ENCODE measurements at regions of chr17 and their contacts with region 1.

Region 1: GRCh38 chr17:74833501-74834377 is 25.9 kb downstream of the GRIN2C start:
- DNase-seq: no peak
- H3K4me3 ChIP-seq: no peak overlapping the region
- H3K27ac ChIP-seq: peak overlapping the region; percentile 30
- H3K4me1 ChIP-seq: peaks cover 14% of the 10 kb centered on the region
- H3K27me3 ChIP-seq: no peaks in the 10 kb centered on the region
- CTCF ChIP-seq: no peak

Region 2: DNA sequence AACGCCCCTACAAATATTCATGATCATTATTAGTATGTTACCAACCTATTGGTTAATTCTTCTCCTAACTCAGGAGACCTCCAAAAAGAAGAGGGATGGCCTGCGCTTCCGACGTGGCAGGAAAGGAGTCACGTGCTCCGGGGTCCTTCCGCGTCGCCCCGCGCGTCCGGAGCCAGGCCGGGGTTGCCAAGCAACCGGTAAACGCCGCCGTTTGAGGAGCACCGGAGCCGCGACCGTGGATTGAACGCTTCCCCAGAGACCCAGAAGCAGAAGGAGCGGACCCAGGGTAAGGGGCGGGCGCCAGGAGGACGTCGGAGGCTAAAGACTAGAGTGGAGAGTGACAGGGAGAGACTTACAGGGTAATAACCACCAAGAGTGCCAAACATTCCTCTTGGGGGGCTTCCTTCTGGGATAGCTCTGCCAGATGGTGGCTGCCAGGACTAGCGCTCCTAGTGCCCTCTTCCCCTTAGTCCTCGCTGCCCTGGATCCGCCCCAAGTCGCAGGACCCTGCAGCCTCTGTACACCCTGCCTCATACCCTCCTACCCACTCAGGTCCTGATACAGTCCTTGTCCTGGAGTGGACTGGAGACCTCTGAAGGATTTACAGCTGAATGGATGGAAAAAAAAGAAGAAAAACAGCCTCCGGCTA is 559.6 kb before region 1 on chr17 and contains the start of gene DNAI2:
- CTCF ChIA-PET with region 1: no interaction called
- POLR2A ChIA-PET with region 1: no interaction called
- intact Hi-C with region 1: no loop called
- DNase-seq: no peak
- H3K4me3 ChIP-seq: no peak within 1 kb of the TSS
- H3K27ac ChIP-seq: no peak within 1 kb of the TSS
- H3K4me1 ChIP-seq: no peaks in the 10 kb centered on the region
- H3K27me3 ChIP-seq: peaks cover 3% of the 10 kb centered on the region
- CTCF ChIP-seq: no peak
- total RNA-seq, gene DNAI2: not detected in 2 replicates

Region 3: GRCh38 chr17:74702116-74702871 is 131.4 kb before region 1 on chr17:
- CTCF ChIA-PET with region 1: no interaction called
- POLR2A ChIA-PET with region 1: no interaction called
- intact Hi-C with region 1: no loop called
- DNase-seq: no peak
- H3K4me3 ChIP-seq: no peak overlapping the region
- H3K27ac ChIP-seq: no peak overlapping the region
- H3K4me1 ChIP-seq: no peaks in the 10 kb centered on the region
- H3K27me3 ChIP-seq: peaks cover 61% of the 10 kb centered on the region
- CTCF ChIP-seq: no peak

Region 4: DNA sequence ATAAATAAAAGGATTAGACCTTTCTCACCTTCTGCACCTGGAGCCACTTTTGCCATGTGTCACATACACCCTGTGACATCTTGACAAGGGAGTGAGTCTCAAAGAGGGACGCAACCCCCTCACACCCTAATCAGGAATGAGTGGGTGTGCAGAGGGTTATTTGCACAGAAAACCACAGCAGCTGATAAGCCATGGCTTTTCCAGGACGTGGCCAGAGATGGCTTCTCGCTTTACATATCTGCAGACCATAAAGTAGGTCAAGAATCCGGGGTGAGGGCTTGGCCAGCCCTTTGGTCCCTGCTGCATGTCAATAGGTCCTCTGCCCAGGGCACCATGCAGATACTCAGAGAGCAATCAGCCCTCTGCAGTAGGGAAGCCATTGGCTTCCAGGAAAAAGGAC is 118.6 kb before region 1 on chr17:
- CTCF ChIA-PET with region 1: no interaction called
- POLR2A ChIA-PET with region 1: no interaction called
- intact Hi-C with region 1: no loop called
- DNase-seq: no peak
- H3K4me3 ChIP-seq: no peak overlapping the region
- H3K27ac ChIP-seq: no peak overlapping the region
- H3K4me1 ChIP-seq: no peaks in the 10 kb centered on the region
- H3K27me3 ChIP-seq: peaks cover 52% of the 10 kb centered on the region
- CTCF ChIP-seq: no peak

Region 5: GRCh38 chr17:74849932-74850709 is 16.4 kb after region 1 on chr17:
- CTCF ChIA-PET with region 1: no interaction called
- POLR2A ChIA-PET with region 1: interaction called, 17 read pairs
- intact Hi-C with region 1: no loop called
- DNase-seq: no peak
- H3K4me3 ChIP-seq: no peak overlapping the region
- H3K27ac ChIP-seq: no peak overlapping the region
- H3K4me1 ChIP-seq: no peaks in the 10 kb centered on the region
- H3K27me3 ChIP-seq: peaks cover 13% of the 10 kb centered on the region
- CTCF ChIP-seq: no peak

Measured in A673 (cell line).